Activated T-helper 1 cell treated with anti-CD3 and anti-CD28 coated beads, Interleukin-12 subunit alpha, Interleukin-12 subunit beta, Interleukin-2, Interleukin-4 antibody, amounts not matched to agents 30 ng/mL and 10 ng/mL and 1 ng/mL, durations not matched to agents 14 hours and 24 hours and 36 hours (primary cell): ENCODE measurements at regions of chr1 and their contacts with region 1.

Region 1: GRCh38 chr1:230978491-230979388 is at the starts of genes ARV1 and TTC13:
- DNase-seq: peak; percentile 97
- H3K4me3 Mint-ChIP-seq: peak within 1 kb of the TSS; percentile 92
- H3K27ac Mint-ChIP-seq: peak within 1 kb of the TSS; percentile 94
- H3K4me1 Mint-ChIP-seq: peaks cover 33% of the 10 kb centered on the region
- H3K27me3 Mint-ChIP-seq: no peaks in the 10 kb centered on the region
- total RNA-seq, gene ARV1: 14.3 and 14.6 TPM in 2 replicates
- total RNA-seq, gene TTC13: 20.7 and 21.8 TPM in 2 replicates

Region 2: DNA sequence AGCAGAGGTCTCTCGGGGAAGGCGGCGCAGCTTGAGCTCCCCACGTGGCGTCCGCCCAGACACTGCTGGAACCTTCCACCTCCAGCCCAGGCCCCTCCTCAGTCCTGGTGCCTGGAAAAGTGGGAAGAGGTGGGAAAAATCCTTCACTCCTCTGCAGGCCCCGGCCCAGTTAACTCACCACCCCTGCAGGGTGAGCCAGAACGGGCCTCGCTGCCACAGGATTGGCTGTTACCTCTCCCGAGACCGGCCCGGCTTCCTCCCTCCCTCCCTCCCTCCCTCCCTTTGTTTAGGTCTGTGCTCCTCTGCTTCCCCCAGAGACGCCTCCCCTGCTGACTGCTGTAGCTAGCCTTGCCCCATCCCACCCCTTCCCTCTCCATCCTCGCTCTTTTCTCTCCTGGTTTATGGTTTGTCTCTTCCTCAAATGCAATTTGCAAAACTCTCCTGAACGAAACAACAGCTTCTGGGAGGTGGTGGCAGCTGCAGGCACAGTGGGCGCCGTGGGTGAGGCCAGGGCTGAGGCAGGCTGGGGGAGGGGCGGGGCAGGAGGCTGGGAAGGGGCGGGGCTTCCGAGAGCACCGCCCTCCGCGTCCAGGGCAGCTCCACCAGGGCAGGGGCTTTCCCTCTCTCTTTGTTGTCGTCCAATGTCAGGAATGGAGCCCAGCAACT is 225.0 kb before region 1 on chr1:
- intact Hi-C with region 1: loop called (anchors 5 kb)
- DNase-seq: peak; percentile 26
- H3K4me3 Mint-ChIP-seq: peak overlapping the region; percentile 68
- H3K27ac Mint-ChIP-seq: peak overlapping the region; percentile 76
- H3K4me1 Mint-ChIP-seq: peaks cover 8% of the 10 kb centered on the region
- H3K27me3 Mint-ChIP-seq: no peaks in the 10 kb centered on the region

Region 3: DNA sequence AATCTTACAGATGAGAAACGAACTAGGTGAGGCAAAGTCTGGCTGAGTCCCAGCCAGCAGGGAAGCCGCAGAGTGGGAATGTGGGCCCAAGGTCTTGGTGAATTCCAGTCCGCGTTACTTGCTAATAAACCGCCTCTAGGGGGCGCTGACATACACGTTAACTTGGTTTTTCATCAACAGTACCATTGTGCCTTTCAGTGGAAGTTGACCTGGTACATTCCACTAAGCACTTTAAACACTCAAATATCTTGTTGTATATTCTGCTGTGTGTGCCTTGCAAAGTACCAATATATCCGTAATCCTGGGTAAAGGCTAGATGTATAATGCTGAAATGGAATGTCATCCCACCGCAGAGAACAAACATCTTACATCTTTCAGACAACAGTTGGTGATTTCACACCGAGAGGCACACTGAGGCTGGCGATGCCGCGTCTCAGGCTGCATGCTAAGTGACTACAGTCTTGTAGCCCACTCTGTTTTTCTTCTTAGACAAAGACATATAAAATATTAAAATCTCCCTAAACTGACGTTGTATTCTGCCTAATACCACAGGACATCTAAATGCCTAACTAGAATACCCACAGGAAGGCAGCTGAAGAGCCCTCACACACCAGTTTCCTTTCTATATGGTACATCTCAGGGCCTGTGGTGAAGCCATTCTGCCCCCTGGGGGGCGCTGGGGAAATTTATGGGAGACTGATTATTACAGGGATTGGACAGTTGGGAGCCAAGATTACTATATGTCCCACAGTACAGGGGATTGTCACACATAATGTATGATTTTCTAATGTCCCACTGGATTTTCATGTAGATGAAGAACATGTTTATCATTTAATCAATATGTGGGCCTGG is 61.2 kb before region 1 on chr1:
- intact Hi-C with region 1: loop called (anchors 1 kb)
- DNase-seq: peak; percentile 44
- H3K4me3 Mint-ChIP-seq: no peak overlapping the region
- H3K27ac Mint-ChIP-seq: no peak overlapping the region
- H3K4me1 Mint-ChIP-seq: no peaks in the 10 kb centered on the region
- H3K27me3 Mint-ChIP-seq: no peaks in the 10 kb centered on the region

Region 4: GRCh38 chr1:231211005-231211857 is 232.5 kb after region 1 on chr1:
- intact Hi-C with region 1: loop called (anchors 1 kb)
- DNase-seq: peak; percentile 81
- H3K4me3 Mint-ChIP-seq: peak overlapping the region; percentile 82
- H3K27ac Mint-ChIP-seq: peak overlapping the region; percentile 66
- H3K4me1 Mint-ChIP-seq: peaks cover 9% of the 10 kb centered on the region
- H3K27me3 Mint-ChIP-seq: peaks cover 5% of the 10 kb centered on the region

Region 5: GRCh38 chr1:231337472-231338269 is 358.9 kb after region 1 on chr1 and contains the start of gene EXOC8:
- intact Hi-C with region 1: loop called (anchors 1 kb)
- DNase-seq: peak; percentile 99
- H3K4me3 Mint-ChIP-seq: peak within 1 kb of the TSS; percentile 98
- H3K27ac Mint-ChIP-seq: peak within 1 kb of the TSS; percentile 100
- H3K4me1 Mint-ChIP-seq: peaks cover 62% of the 10 kb centered on the region
- H3K27me3 Mint-ChIP-seq: peaks cover 3% of the 10 kb centered on the region
- total RNA-seq, gene EXOC8: 14.4 and 15.6 TPM in 2 replicates